ENCODE measurements at regions of chr11 and their contacts with region 1.

Region 1: GRCh38 chr11:78832226-78832947 is 257.7 kb upstream of the NARS2 start:
- DNase-seq: peak in 1 of 4 experiments; percentile 6
- ATAC-seq: no peak
- H3K4me3 ChIP-seq: no peak overlapping the region
- H3K27ac ChIP-seq: no peak overlapping the region
- H3K4me1 ChIP-seq: no peaks in the 10 kb centered on the region
- H3K27me3 ChIP-seq: peaks cover 0 to 7% of the 10 kb centered on the region in 2 experiments; a peak in 2 of 5 replicates
- CTCF ChIP-seq: peak in 2 of 3 experiments; percentile 24 to 33; a peak in 3 of 6 replicates
- EP300 ChIP-seq: no peak
- POLR2A ChIP-seq: no peak
- RAD21 ChIP-seq: peak; percentile 35 to 37; a peak in 2 of 4 replicates

Region 2: GRCh38 chr11:78783301-78783700 is 49.1 kb before region 1 on chr11:
- CTCF ChIA-PET with region 1: no interaction called
- POLR2A ChIA-PET with region 1: no interaction called
- in situ Hi-C with region 1: no loop called
- intact Hi-C with region 1: no loop called
- DNase-seq: no peak
- ATAC-seq: no peak
- H3K4me3 ChIP-seq: no peak overlapping the region
- H3K27ac ChIP-seq: no peak overlapping the region
- H3K4me1 ChIP-seq: 0 out of 5 replicates have a peak, but pooled peaks cover 0 to 3% of the 10 kb centered on the region in 2 experiments
- H3K27me3 ChIP-seq: peaks cover 0 to 19% of the 10 kb centered on the region in 2 experiments; a peak in 2 of 5 replicates
- CTCF ChIP-seq: no peak
- EP300 ChIP-seq: no peak
- POLR2A ChIP-seq: no peak
- RAD21 ChIP-seq: no peak

Region 3: DNA sequence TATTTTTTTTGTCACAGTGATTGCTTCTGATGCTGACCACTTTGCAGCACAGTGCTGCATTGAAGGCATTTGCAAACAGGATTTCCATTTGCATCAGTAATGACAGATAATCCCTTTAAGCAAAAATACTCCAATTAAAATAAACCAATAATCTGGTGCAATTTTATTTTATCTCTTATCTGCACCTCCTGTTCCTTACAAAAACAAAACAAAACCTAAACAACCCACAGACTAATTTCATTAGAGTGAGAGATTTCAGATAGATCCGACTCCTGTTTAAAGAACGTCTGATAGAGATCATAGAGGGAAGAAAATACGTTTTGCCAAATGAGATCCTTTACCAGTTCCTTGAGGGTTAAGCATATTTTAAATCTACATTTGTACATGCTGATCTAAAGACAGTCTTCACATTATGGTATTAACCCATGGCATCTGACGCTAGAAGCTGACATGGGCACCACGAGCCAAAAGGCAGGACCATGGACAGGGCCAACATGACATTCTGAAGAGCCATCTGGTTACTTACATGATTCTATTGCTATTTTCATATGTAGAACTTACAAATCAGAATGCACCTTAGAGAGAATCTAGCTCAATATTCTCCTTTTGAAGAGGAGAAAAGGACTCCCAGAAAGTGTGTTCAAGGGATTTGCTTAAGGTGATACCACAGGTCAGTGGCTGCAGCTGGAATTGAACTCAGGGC is 28.5 kb after region 1 on chr11:
- CTCF ChIA-PET with region 1: no interaction called
- POLR2A ChIA-PET with region 1: no interaction called
- in situ Hi-C with region 1: no loop called
- intact Hi-C with region 1: no loop called
- DNase-seq: peak in 3 of 4 experiments; percentile 3 to 15 (median 11)
- ATAC-seq: no peak
- H3K4me3 ChIP-seq: no peak overlapping the region
- H3K27ac ChIP-seq: no peak overlapping the region
- H3K4me1 ChIP-seq: no peaks in the 10 kb centered on the region
- H3K27me3 ChIP-seq: no peaks in the 10 kb centered on the region
- CTCF ChIP-seq: no peak
- EP300 ChIP-seq: no peak
- POLR2A ChIP-seq: no peak
- RAD21 ChIP-seq: no peak

Region 4: GRCh38 chr11:79076526-79077115 is 244.2 kb after region 1 on chr11:
- CTCF ChIA-PET with region 1: no interaction called
- POLR2A ChIA-PET with region 1: no interaction called
- in situ Hi-C with region 1: no loop called
- intact Hi-C with region 1: loop called (anchors 5 kb)
- DNase-seq: peak; percentile 51 to 55 (median 54)
- ATAC-seq: peak; percentile 83
- H3K4me3 ChIP-seq: no peak overlapping the region
- H3K27ac ChIP-seq: no peak overlapping the region
- H3K4me1 ChIP-seq: no peaks in the 10 kb centered on the region
- H3K27me3 ChIP-seq: peaks cover 0 to 7% of the 10 kb centered on the region in 2 experiments; a peak in 1 of 5 replicates
- CTCF ChIP-seq: peak; percentile 31 to 64 (median 63); a peak in 5 of 6 replicates
- EP300 ChIP-seq: no peak
- POLR2A ChIP-seq: no peak
- RAD21 ChIP-seq: peak; percentile 40 to 41

Measured in K562 (cell line).